Heart left ventricle (tissue), 16 donors: ENCODE measurements at regions of chr13 and their contacts with region 1.

Region 1: DNA sequence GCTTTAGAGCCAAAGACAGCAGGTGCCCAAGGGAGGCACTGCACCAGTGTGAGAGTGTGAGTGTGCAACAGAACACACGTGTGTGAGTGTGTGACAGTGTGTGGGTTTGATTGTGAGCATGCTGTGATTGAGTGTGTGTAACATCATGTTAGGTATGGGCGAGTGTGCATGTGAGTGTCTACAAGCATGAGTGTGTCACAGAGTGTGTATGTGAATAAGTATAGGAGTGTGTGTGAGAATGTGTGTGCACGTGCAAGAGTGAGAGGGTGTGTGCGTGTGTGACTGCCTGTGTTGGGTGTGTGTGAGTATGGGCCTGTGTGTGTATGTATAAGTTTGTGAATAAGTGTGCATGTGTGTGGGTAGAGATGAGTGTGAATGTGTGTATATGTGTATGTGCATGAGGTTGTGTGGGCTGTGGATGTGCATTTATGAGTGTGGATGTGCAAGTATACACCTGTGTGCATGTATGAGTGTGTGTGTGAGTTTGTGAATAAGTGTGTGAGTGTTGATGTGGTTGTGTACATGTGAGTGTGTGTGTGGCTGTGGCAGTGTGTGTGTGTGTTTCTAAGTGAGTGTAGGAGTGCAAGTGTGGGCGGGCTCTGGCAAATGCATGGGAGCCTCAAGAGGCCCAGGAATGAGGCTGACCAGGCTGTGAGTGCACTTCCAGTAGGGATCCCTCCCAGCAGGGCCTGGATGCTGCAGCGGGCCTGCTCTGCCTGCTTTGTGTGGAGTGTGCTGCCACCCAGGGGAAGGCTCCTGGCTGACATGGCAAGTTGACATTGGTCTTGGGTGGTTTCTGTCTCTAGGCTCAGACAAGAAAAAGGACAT is 198.4 kb downstream of the COL4A1 start:
- DNase-seq: peak; percentile 78 to 88 (median 87)
- ATAC-seq: peak; percentile 87 to 92 (median 90)
- H3K4me3 ChIP-seq: no peak overlapping the region
- H3K27ac ChIP-seq: peak overlapping the region in 11 of 12 donors; percentile 57 to 81 (median 71)
- H3K4me1 ChIP-seq: peaks cover 3 to 38% (median 13%) of the 10 kb centered on the region in 12 donors
- H3K27me3 ChIP-seq: no peaks in the 10 kb centered on the region
- CTCF ChIP-seq: peak; percentile 31 to 80 (median 68)
- POLR2A ChIP-seq: no peak

Region 2: DNA sequence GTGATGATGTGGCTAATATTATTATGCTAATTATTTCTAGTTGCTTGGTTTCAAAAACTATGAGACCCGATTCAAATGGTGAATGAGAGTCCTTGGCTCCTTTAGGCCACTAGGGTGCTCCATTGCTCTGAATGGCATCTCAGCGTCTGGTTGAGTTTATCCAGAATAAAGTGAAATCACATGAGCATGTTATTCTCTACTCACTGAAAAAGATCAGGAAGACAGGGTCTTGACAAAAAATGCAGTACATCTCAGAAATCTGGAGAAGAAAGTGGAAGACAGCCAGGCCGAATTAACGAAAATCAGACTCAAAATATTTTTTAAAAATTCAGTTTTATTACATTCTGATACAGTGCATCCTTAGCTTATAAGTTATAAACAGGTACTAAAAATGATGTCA is 962.9 kb before region 1 on chr13:
- intact Hi-C with region 1: loop called in 9 of 10 experiments (anchors 5 to 10 kb)
- DNase-seq: peak in 3 of 5 donors; percentile 30 to 49 (median 39)
- ATAC-seq: peak; percentile 73 to 88 (median 82)
- H3K4me3 ChIP-seq: no peak overlapping the region
- H3K27ac ChIP-seq: peak overlapping the region in 1 of 12 donors; percentile 6
- H3K4me1 ChIP-seq: peaks cover 0 to 4% (median 0%) of the 10 kb centered on the region in 12 donors
- H3K27me3 ChIP-seq: peaks cover 0 to 18% (median 7%) of the 10 kb centered on the region in 9 donors
- CTCF ChIP-seq: peak; percentile 51 to 79 (median 70)
- POLR2A ChIP-seq: no peak

Region 3: GRCh38 chr13:109786457-109787134 is 322.0 kb before region 1 on chr13 and contains the start of gene IRS2:
- intact Hi-C with region 1: loop called (anchors 2 to 10 kb)
- DNase-seq: peak; percentile 91 to 95 (median 93)
- ATAC-seq: peak; percentile 78 to 93 (median 87)
- H3K4me3 ChIP-seq: peak within 1 kb of the TSS; percentile 64 to 95 (median 80)
- H3K27ac ChIP-seq: peak within 1 kb of the TSS; percentile 74 to 97 (median 91)
- H3K4me1 ChIP-seq: peaks cover 0 to 51% (median 23%) of the 10 kb centered on the region in 12 donors
- H3K27me3 ChIP-seq: peaks cover 0 to 7% (median 0%) of the 10 kb centered on the region in 9 donors
- CTCF ChIP-seq: no peak
- POLR2A ChIP-seq: peak; percentile 87 to 97
- total RNA-seq, gene IRS2: 6.5 to 54.9 (median 14.4) TPM

Region 4: DNA sequence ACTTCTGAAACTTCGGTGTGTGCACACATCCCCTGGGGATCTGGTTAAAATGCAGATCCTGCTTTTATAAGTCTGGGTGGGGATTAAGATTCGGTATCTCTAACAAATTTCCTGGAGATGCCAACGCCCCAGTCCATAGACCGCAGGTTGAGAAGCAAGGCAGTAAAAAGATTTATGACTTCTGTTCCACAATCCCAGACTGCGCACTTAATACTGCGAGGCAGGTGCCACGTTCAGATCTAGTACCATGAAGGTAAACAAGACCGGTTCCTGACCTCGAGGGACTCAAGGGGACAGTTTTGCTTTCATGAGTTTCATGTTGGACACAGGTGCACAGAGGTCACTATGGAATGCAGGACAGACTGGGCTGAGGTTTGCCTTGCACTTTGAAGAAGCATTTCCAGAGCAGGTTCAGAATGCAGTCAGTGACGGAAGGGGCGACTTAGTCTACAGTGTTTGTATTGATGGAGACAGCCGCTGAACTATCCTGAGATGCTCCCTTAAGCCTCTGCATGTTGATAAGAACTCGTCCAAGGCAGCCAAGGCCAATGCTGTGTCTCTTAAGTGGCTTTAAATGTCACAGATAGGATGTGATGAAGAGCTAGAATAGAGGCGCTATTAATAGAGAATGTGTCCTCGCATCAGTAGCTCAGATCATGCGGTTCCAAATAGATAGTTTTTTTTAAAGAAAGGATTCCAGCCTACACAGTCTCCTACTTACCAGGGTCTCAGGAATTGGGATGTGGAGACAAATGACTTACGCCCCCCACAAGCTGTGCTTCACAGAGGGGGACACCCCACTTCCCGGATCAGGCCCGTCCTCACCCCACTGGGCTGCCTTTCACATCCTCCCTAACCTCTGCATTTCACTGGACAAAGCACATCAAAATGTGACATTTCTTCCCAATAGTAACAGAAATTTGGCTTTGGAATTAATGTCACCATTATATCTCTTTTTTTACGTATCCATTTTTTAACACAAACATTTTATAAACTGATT is 225.1 kb before region 1 on chr13:
- intact Hi-C with region 1: loop called in 5 of 10 experiments (anchors 10 kb)
- DNase-seq: peak in 2 of 5 donors; percentile 44 to 53
- ATAC-seq: peak; percentile 89 to 96 (median 92)
- H3K4me3 ChIP-seq: no peak overlapping the region
- H3K27ac ChIP-seq: peak overlapping the region in 3 of 12 donors; percentile 30 to 57 (median 33)
- H3K4me1 ChIP-seq: peaks cover 0 to 19% (median 0%) of the 10 kb centered on the region in 12 donors
- H3K27me3 ChIP-seq: no peaks in the 10 kb centered on the region
- CTCF ChIP-seq: no peak
- POLR2A ChIP-seq: no peak

Region 5: GRCh38 chr13:110030394-110030928 is 78.1 kb before region 1 on chr13:
- intact Hi-C with region 1: no loop called
- DNase-seq: no peak
- ATAC-seq: no peak
- H3K4me3 ChIP-seq: no peak overlapping the region
- H3K27ac ChIP-seq: no peak overlapping the region
- H3K4me1 ChIP-seq: no peaks in the 10 kb centered on the region
- H3K27me3 ChIP-seq: no peaks in the 10 kb centered on the region
- CTCF ChIP-seq: no peak
- POLR2A ChIP-seq: no peak

Region 6: DNA sequence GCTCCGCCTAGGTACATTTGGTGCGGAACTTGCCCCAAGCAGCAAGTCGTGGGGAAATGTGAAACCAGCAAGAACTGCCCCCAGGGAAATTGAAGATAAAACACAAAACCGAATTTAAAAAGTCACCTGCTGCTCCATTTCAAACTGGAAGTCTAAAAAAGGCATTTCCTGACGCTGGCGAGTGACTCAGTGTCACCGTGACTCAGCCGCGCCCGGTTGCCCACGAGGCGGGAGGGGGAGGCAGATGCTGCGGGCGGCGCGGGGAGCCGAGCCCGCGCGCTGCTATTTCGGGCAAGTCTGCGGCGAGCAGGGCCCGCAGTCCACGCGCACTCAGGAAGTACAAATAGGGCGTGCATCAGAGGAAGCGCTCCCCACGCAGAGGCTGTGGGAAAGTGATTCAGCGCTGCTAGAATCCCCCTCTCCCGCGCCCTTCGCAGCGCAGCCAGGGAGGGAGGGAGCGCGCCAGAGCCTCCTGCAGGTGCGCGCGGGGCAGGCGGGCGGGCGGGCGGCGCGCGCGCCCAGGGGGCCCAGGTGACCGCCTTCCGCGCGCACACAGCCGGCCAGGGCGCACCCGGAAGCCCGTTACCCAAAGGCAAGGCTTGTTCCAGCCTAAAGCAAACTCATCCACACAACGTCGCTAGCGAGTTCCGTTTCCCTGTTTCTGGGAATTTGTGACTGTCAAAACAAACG is 29.6 kb after region 1 on chr13:
- intact Hi-C with region 1: loop called in 2 of 10 experiments (anchors 1 to 2 kb)
- DNase-seq: peak; percentile 58 to 83 (median 78)
- ATAC-seq: peak in 3 of 4 donors; percentile 51 to 66 (median 64)
- H3K4me3 ChIP-seq: peak overlapping the region; percentile 37 to 81 (median 60)
- H3K27ac ChIP-seq: peak overlapping the region; percentile 36 to 97 (median 83)
- H3K4me1 ChIP-seq: peaks cover 0 to 41% (median 20%) of the 10 kb centered on the region in 12 donors
- H3K27me3 ChIP-seq: no peaks in the 10 kb centered on the region
- CTCF ChIP-seq: peak in 2 of 12 donors; percentile 6 to 34
- POLR2A ChIP-seq: peak in 1 of 2 donors; percentile 24